Activated naive CD8-positive, alpha-beta T cell treated with anti-CD3 and anti-CD28 coated beads, Interleukin-2, amount 10 ng/mL, durations not matched to agents 7 days and 5 days (primary cell): ENCODE measurements at regions of chr3 and their contacts with region 1.

Region 1: GRCh38 chr3:136535906-136536305 is 216.3 kb downstream of the STAG1 start:
- DNase-seq: no peak
- ATAC-seq: no peak
- H3K4me3 Mint-ChIP-seq: no peak overlapping the region
- H3K27ac Mint-ChIP-seq: no peak overlapping the region
- H3K4me1 Mint-ChIP-seq: no peaks in the 10 kb centered on the region
- H3K27me3 Mint-ChIP-seq: no peaks in the 10 kb centered on the region

Region 2: GRCh38 chr3:136518102-136518501 is 17.8 kb before region 1 on chr3:
- POLR2A ChIA-PET with region 1: no interaction called
- DNase-seq: no peak
- ATAC-seq: no peak
- H3K4me3 Mint-ChIP-seq: no peak overlapping the region
- H3K27ac Mint-ChIP-seq: no peak overlapping the region
- H3K4me1 Mint-ChIP-seq: peaks cover 1% of the 10 kb centered on the region
- H3K27me3 Mint-ChIP-seq: no peaks in the 10 kb centered on the region

Region 3: DNA sequence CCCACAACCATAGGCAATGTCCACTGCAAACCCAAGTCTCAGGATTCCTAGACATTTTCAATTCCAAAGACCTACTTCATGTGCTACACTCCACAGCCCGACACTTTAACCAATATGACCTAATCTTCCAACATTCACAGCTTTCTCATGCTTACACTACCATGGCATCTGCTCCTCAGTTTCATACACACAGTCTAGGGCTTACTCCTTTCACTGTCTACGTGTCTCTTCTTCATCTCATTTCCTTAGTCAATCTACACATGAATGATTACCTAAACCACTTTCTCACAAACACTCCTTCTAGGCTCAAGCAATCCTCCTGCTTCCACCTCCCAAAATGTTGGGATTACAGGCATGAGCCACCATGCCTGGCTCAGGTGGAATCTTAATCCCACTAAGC is 110.0 kb after region 1 on chr3:
- POLR2A ChIA-PET with region 1: interaction called, 10 read pairs
- DNase-seq: no peak
- ATAC-seq: no peak
- H3K4me3 Mint-ChIP-seq: no peak overlapping the region
- H3K27ac Mint-ChIP-seq: no peak overlapping the region
- H3K4me1 Mint-ChIP-seq: peaks cover 9% of the 10 kb centered on the region
- H3K27me3 Mint-ChIP-seq: no peaks in the 10 kb centered on the region